ENCODE measurements at regions of chr10 and their contacts with region 1.

Region 1: GRCh38 chr10:45594276-45595106 is 78.1 kb downstream of the ZFAND4 start:
- DNase-seq: peak; percentile 93 to 97 (median 95)
- ATAC-seq: peak; percentile 97 to 99 (median 98)
- H3K4me3 ChIP-seq: peak overlapping the region; percentile 63 to 97 (median 84)
- H3K27ac ChIP-seq: peak overlapping the region; percentile 2 to 87 (median 67)
- H3K4me1 ChIP-seq: peaks cover 0 to 29% (median 21%) of the 10 kb centered on the region in 12 donors
- H3K27me3 ChIP-seq: peaks cover 0 to 3% (median 0%) of the 10 kb centered on the region in 9 donors
- CTCF ChIP-seq: peak in 2 of 12 donors; percentile 28 to 34
- POLR2A ChIP-seq: peak in 1 of 2 donors; percentile 71

Region 2: GRCh38 chr10:45420453-45421192 is 173.9 kb before region 1 on chr10:
- intact Hi-C with region 1: loop called in 1 of 10 experiments (anchors 5 kb)
- DNase-seq: peak; percentile 78 to 91 (median 87)
- ATAC-seq: peak; percentile 11 to 61 (median 47)
- H3K4me3 ChIP-seq: peak overlapping the region in 6 of 12 donors; percentile 59 to 77 (median 72)
- H3K27ac ChIP-seq: peak overlapping the region; percentile 77 to 99 (median 92)
- H3K4me1 ChIP-seq: peaks cover 5 to 72% (median 24%) of the 10 kb centered on the region in 12 donors
- H3K27me3 ChIP-seq: no peaks in the 10 kb centered on the region
- CTCF ChIP-seq: no peak
- POLR2A ChIP-seq: no peak

Region 3: DNA sequence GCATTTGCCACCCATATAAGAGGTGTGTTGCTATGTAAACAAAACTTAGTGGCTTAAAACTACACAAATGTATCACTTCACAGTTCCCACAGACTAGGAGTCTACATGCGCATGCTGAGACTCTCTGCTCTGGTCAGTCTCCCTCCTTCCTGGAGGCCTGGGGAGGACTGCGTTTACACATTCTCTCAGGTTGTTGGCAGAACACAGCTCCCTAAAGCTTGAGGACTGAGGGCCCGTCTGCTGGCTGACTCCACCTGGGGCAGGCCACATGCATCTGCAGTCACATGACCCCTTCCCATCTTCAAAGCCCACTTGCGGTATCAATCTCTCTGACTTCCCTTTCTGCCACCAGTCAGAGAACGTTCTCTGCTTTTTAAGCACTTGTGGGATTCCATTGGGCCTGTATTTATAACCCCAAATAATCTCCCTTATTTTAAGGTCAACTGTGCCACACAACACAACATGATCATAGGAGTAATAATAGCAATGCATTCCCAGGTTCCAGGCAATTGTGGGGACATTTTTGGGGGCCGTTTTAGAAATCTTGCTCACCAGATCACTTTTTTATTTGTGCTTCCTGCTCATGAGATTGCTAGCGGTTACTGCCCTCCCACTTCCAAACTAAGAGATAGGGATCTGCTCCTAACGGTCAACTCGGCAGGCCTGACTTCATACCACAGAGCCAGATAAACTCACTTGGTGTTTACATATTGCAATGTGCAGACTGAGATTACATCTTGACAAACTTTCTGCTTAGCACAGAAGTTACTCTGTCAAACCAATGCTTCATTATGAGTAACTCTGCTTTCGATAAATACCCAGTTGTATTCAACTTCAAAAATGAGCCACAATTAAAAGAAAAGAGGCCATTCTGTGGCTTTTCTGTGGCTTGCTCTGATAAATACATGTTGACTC is 124.1 kb before region 1 on chr10:
- intact Hi-C with region 1: loop called in 8 of 10 experiments (anchors 5 to 10 kb)
- DNase-seq: no peak
- ATAC-seq: peak; percentile 30 to 65 (median 46)
- H3K4me3 ChIP-seq: no peak overlapping the region
- H3K27ac ChIP-seq: peak overlapping the region in 8 of 12 donors; percentile 11 to 56 (median 28)
- H3K4me1 ChIP-seq: peaks cover 0 to 37% (median 23%) of the 10 kb centered on the region in 12 donors
- H3K27me3 ChIP-seq: no peaks in the 10 kb centered on the region
- CTCF ChIP-seq: no peak
- POLR2A ChIP-seq: no peak

Region 4: GRCh38 chr10:45557275-45557905 is 37.1 kb before region 1 on chr10:
- intact Hi-C with region 1: no loop called
- DNase-seq: no peak
- ATAC-seq: peak in 2 of 4 donors; percentile 47 to 65
- H3K4me3 ChIP-seq: peak overlapping the region in 1 of 12 donors; percentile 6
- H3K27ac ChIP-seq: peak overlapping the region in 1 of 12 donors; percentile 34
- H3K4me1 ChIP-seq: peaks cover 0 to 19% (median 7%) of the 10 kb centered on the region in 12 donors
- H3K27me3 ChIP-seq: no peaks in the 10 kb centered on the region
- CTCF ChIP-seq: no peak
- POLR2A ChIP-seq: no peak

Measured in heart left ventricle (tissue), 16 donors.